IMR-90 (cell line): ENCODE measurements at regions of chr7 and their contacts with region 1.

Region 1: GRCh38 chr7:129009437-129009836 is 45.5 kb downstream of the TNPO3 start:
- DNase-seq: no peak
- ATAC-seq: no peak
- H3K4me3 ChIP-seq: no peak overlapping the region
- H3K27ac ChIP-seq: no peak overlapping the region
- H3K4me1 ChIP-seq: no peaks in the 10 kb centered on the region
- H3K27me3 ChIP-seq: no peaks in the 10 kb centered on the region
- CTCF ChIP-seq: no peak
- POLR2A ChIP-seq: no peak
- RAD21 ChIP-seq: no peak

Region 2: DNA sequence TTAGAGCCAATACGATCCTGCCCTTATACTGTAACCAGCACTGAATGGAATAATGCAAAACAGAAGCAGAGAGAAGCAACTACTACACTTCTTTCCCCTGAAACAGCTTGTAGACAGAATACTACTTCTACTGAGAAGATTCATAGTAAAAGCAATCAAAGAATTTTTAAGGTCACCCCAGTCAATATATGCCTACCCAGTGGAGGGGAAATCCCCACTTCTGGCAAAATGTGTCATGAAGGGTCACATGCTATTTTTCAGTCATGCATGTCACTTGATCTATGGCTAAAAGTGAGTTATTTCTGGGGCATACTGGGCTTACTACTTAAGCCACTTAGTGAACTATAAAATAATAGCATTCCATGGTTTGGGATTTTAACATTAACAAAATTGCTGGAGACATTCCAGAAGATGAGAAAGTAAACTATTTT is 46.1 kb before region 1 on chr7:
- CTCF ChIA-PET with region 1: no interaction called
- POLR2A ChIA-PET with region 1: no interaction called
- dilution Hi-C with region 1: no loop called
- in situ Hi-C with region 1: no loop called
- intact Hi-C with region 1: loop called (anchors 5 kb)
- DNase-seq: peak; percentile 37
- ATAC-seq: peak; percentile 32
- H3K4me3 ChIP-seq: no peak overlapping the region
- H3K27ac ChIP-seq: no peak overlapping the region
- H3K4me1 ChIP-seq: peaks cover 4% of the 10 kb centered on the region; the same call in 1 of the 2 replicates
- H3K27me3 ChIP-seq: no peaks in the 10 kb centered on the region
- CTCF ChIP-seq: no peak
- POLR2A ChIP-seq: no peak
- RAD21 ChIP-seq: no peak

Region 3: DNA sequence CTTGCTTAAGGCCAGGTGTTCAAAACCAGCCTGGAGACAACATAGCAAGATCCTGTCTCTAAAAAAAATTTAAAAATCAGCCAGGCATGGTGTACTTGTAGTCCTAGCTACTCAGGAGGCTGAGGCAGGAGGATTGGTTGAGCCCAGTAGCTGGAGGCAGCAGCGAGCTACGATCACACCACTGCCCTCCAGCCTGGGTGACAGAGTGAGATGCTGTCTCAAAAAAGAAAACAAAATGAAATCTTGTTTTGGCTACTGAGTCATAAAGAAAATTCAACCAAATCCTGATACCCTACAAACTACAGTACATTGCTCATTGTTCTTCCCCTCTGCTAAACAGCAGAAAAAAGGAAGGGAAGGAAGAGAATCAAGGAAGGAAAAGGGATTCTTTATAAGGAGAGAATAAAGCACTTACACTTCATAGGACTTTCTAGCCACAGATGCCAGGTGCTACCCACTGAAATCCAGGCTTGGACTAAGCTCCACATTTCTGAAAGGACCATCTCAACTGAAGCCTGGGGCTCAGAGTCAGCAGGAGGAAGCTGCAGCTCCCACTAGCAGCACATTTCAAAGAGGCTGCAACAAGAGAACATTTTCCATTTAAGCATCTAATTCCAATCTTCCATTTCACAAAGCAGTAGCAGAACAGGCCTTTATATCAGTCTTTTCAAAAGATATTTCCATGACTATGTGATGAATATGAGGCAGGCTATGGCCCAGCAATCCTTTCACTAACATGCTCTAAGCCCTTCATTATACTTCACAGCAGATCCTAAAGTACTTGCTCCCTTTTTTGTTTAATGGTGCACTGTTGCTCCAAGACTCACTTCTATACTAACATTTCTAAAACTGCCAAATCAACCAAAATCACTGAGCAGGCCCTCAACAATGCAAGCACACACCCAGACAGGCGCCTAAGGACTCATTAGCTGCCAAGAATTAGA is 32.0 kb after region 1 on chr7:
- CTCF ChIA-PET with region 1: no interaction called
- POLR2A ChIA-PET with region 1: no interaction called
- dilution Hi-C with region 1: no loop called
- in situ Hi-C with region 1: no loop called
- intact Hi-C with region 1: loop called (anchors 5 kb)
- DNase-seq: no peak
- ATAC-seq: no peak
- H3K4me3 ChIP-seq: no peak overlapping the region
- H3K27ac ChIP-seq: no peak overlapping the region
- H3K4me1 ChIP-seq: 0 out of 2 replicates have a peak, but pooled peaks cover 1% of the 10 kb centered on the region
- H3K27me3 ChIP-seq: no peaks in the 10 kb centered on the region
- CTCF ChIP-seq: no peak
- POLR2A ChIP-seq: no peak
- RAD21 ChIP-seq: no peak